ENCODE measurements at regions of chr2 and their contacts with region 1.

Region 1: GRCh38 chr2:65017335-65017734 is 28.1 kb downstream of the SLC1A4 start:
- DNase-seq: peak; percentile 65
- H3K4me3 ChIP-seq: no peak overlapping the region
- H3K27ac ChIP-seq: no peak overlapping the region
- H3K4me1 ChIP-seq: peaks cover 23% of the 10 kb centered on the region
- CTCF ChIP-seq: peak; percentile 79

Region 2: GRCh38 chr2:64982311-64982857 is 35.0 kb before region 1 on chr2:
- CTCF ChIA-PET with region 1: no interaction called
- POLR2A ChIA-PET with region 1: no interaction called
- intact Hi-C with region 1: no loop called
- DNase-seq: no peak
- H3K4me3 ChIP-seq: no peak overlapping the region
- H3K27ac ChIP-seq: no peak overlapping the region
- H3K4me1 ChIP-seq: peaks cover 6% of the 10 kb centered on the region
- CTCF ChIP-seq: no peak

Region 3: GRCh38 chr2:65040400-65041261 is 23.3 kb after region 1 on chr2:
- CTCF ChIA-PET with region 1: no interaction called
- POLR2A ChIA-PET with region 1: no interaction called
- intact Hi-C with region 1: loop called (anchors 1 kb)
- DNase-seq: peak; percentile 85
- H3K4me3 ChIP-seq: no peak overlapping the region
- H3K27ac ChIP-seq: no peak overlapping the region
- H3K4me1 ChIP-seq: peaks cover 9% of the 10 kb centered on the region
- CTCF ChIP-seq: peak; percentile 98

Measured in OCI-LY7 (cell line).